ENCODE measurements at regions of chr19 and their contacts with region 1.

Region 1: GRCh38 chr19:55117636-55118391 is at the start of gene PPP1R12C:
- DNase-seq: peak; percentile 98 to 99
- H3K4me3 ChIP-seq: peak within 1 kb of the TSS; percentile 99
- H3K27ac ChIP-seq: peak within 1 kb of the TSS; percentile 47
- H3K4me1 ChIP-seq: peaks cover 22% of the 10 kb centered on the region
- H3K27me3 ChIP-seq: no peaks in the 10 kb centered on the region
- CTCF ChIP-seq: no peak; the same call in 1 of the 2 replicates
- total RNA-seq, gene PPP1R12C: 110 and 114 TPM in 2 replicates

Region 2: GRCh38 chr19:55005684-55006488 is 111.9 kb before region 1 on chr19:
- CTCF ChIA-PET with region 1: no interaction called
- POLR2A ChIA-PET with region 1: no interaction called
- intact Hi-C with region 1: loop called (anchors 1 kb)
- DNase-seq: peak; percentile 73 to 87
- H3K4me3 ChIP-seq: peak overlapping the region; percentile 71
- H3K27ac ChIP-seq: peak overlapping the region; percentile 58
- H3K4me1 ChIP-seq: no peaks in the 10 kb centered on the region; the same call in 1 of the 2 replicates
- H3K27me3 ChIP-seq: peaks cover 25% of the 10 kb centered on the region
- CTCF ChIP-seq: no peak

Region 3: DNA sequence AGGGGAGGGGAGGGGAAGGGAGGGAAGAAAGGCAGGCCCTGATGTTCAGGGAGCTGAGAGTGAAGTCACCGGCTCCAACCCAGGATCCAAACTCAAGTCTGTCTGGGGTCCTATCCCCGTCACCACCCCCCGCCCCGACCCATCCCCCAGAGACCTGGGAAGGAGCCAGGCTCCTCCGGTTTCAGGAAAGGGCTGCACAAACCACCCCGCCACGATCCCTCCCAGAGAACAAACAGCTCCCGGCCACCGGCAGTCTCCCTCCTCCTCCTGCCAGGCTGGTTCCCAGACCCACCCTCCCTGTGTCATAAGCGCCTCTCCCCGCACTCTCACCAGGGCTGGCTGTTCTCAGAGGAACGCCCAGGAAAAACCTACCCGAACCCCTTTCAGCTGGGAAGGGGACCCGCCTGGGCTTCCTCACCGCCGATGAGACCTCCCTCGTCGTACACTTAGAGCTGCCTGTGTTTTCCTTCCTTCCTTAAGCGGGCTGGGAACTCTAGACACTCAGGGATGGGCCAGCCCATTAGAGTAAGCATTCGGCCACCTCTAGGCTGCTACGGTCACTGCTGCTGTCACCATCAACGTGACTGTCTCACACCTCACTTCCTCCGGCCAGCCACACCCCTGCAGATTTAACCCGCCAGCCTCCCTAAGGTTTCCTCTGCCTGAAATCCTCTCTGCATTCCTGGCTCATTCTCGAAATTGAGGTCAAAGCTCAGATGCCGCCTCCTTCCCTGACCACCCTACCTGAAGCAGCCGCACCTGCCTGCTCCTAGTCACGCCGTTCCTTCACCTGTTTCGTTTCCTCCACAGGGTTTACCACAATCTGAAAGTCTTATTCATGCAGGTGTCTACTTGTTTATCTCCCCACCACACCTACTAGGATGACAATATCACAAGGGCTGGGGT is 48.6 kb before region 1 on chr19:
- CTCF ChIA-PET with region 1: no interaction called
- POLR2A ChIA-PET with region 1: no interaction called
- intact Hi-C with region 1: loop called (anchors 2 kb)
- DNase-seq: peak; percentile 90 to 98
- H3K4me3 ChIP-seq: peak overlapping the region; percentile 63
- H3K27ac ChIP-seq: peak overlapping the region; percentile 98
- H3K4me1 ChIP-seq: peaks cover 31% of the 10 kb centered on the region
- H3K27me3 ChIP-seq: no peaks in the 10 kb centered on the region
- CTCF ChIP-seq: no peak; the same call in 1 of the 2 replicates

Region 4: GRCh38 chr19:55132453-55133129 is 14.8 kb after region 1 on chr19:
- CTCF ChIA-PET with region 1: interaction called, 13 read pairs
- POLR2A ChIA-PET with region 1: interaction called, 3 read pairs
- intact Hi-C with region 1: no loop called
- DNase-seq: no peak
- H3K4me3 ChIP-seq: no peak overlapping the region
- H3K27ac ChIP-seq: no peak overlapping the region
- H3K4me1 ChIP-seq: no peaks in the 10 kb centered on the region
- H3K27me3 ChIP-seq: no peaks in the 10 kb centered on the region
- CTCF ChIP-seq: no peak

Region 5: DNA sequence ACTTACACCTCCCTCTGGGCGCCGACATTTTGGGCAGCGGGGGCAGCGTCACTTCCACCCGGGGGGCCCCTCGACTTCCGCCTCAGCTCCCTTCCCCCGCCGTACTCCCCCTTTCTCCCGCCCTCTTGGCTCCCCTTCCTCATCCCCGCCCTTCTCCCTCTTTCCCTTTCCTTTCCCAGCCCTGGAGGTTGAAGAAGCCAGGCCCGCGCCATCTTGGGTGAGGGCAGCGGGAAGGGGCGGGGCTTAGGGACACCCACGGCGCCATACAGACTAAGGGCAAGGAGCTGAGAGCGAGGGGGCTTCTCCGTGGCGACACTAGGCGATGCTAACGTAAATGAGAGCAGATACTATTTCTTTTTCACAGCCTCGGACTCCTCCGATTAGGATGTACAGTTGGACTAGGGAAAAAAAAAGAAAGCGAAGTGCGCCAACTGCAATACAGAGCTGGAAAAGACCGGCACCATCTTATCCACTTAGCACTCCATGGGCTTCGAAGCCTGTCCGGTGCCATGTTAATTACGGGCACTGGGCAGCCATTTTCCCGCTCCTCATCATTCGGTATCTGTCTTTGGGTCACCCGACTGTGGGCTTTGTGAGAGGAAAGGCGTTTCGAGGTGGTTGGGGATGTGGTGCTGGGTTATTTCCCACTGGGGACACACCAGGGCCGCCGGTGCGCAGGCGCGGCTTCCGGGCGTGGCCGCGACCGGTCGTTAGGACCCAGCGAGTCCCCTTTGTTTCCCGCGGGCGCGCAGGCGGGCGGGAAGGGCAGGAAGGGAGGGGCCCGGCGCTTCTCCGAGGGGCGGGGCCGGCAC is 481.9 kb after region 1 on chr19 and contains the start of gene FIZ1:
- CTCF ChIA-PET with region 1: no interaction called
- POLR2A ChIA-PET with region 1: interaction called, 22 read pairs
- intact Hi-C with region 1: no loop called
- DNase-seq: peak; percentile 93 to 98
- H3K4me3 ChIP-seq: peak within 1 kb of the TSS; percentile 91
- H3K27ac ChIP-seq: peak within 1 kb of the TSS; percentile 94
- H3K4me1 ChIP-seq: peaks cover 22% of the 10 kb centered on the region
- H3K27me3 ChIP-seq: no peaks in the 10 kb centered on the region
- CTCF ChIP-seq: 0 out of 2 replicates have a peak, but pooled peaks have one; percentile 16
- total RNA-seq, gene FIZ1: 25.2 and 25.4 TPM in 2 replicates